ENCODE measurements at regions of chr10 and their contacts with region 1.

Region 1: DNA sequence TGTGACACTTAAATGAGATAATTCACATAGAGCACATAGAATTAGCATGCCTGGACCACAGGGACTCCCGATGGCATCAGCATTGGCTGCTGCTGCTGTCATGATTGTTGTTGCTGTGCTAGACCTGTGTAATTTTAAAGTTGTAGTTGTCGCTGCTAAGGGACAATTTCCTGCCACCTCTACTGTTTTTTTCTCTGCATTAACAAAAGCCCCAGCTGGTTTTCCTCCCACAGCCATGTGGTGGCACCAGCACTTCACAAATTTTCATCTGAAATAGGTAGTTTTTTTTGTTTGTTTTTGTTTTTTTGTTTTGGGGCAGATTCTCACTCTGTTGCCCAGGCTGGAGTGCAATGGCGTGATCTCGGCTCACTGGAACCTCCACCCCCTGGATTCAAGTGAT is 25.4 kb upstream of the PRXL2A start:
- DNase-seq: peak; percentile 41

Region 2: DNA sequence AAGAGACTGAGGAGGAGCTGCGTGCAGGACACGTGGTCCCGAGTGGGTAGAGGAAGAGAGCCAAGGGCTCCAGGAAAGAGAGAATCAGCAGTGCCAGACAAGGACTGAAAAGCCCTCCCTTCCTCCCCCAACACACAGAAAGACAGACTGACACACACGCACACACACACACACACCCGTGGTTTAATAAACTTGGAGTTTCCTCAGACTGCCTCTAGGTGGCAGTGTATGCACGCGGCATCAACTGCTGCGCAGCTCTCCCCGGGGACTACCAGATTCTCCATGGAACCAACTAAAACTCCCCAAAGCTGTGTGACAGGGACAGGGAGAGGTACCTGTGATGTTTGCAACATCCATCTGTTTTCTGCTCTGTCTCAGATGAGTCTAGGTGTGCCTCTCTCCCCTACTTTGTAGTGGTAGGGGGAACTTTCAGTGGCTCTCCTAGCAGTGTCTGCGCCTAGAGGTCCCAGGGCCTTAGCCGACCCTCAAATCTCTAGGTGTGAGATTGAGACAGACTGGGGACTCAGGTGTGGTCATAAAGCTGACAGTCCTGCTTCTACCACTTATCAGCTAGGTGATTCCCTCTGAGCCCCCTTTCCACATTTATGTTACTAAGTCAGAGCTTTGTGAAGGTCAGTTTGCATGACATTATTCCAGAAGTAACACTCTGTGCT is 61.8 kb after region 1 on chr10:
- CTCF ChIA-PET with region 1: interaction called, 12 read pairs
- POLR2A ChIA-PET with region 1: no interaction called
- DNase-seq: peak; percentile 77